MCF 10A (cell line): ENCODE measurements at regions of chr17 and their contacts with region 1.

Region 1: GRCh38 chr17:81238817-81239600 is at the starts of genes NDUFAF8 and TEPSIN:
- DNase-seq: peak; percentile 100
- H3K4me3 Mint-ChIP-seq: peak within 1 kb of the TSS; percentile 84
- H3K27ac Mint-ChIP-seq: peak within 1 kb of the TSS; percentile 87
- H3K4me1 Mint-ChIP-seq: peaks cover 24% of the 10 kb centered on the region
- H3K27me3 Mint-ChIP-seq: no peaks in the 10 kb centered on the region
- CTCF ChIP-seq: no peak
- total RNA-seq, gene NDUFAF8: 95.0 and 95.3 TPM in 2 replicates
- total RNA-seq, gene TEPSIN: 23.4 and 27.4 TPM in 2 replicates

Region 2: DNA sequence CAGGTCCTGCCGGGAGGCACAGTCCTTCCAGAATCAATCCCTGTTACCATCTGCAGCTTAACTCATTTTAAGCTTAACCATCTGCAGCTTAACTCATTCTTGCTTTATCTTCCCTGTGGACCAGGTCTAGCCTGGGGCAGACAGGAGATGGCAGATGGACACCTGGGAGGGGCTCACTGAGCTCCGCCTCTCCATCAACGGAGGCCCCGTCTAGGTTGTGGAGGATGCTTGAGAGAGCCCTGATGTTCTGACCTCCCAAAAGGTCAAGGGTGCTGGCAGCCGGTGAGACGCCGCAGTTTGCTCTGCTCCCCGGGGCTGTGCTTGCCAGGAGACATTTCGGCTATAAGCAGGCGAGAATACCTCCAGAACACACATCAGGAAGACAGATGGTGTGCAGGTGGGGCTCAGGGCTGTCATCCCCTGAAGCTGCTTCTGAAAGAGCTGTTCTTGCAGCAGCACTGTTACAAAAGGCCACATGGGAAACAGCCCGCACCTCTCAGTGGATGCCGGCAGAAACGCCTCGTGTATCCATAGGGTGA is 162.8 kb before region 1 on chr17:
- CTCF ChIA-PET with region 1: no interaction called
- POLR2A ChIA-PET with region 1: no interaction called
- intact Hi-C with region 1: no loop called
- DNase-seq: no peak
- H3K4me3 Mint-ChIP-seq: no peak overlapping the region
- H3K27ac Mint-ChIP-seq: peak overlapping the region; percentile 57
- H3K4me1 Mint-ChIP-seq: peaks cover 28% of the 10 kb centered on the region
- H3K27me3 Mint-ChIP-seq: no peaks in the 10 kb centered on the region
- CTCF ChIP-seq: no peak

Region 3: GRCh38 chr17:81222906-81223761 is 15.9 kb before region 1 on chr17 and contains the start of gene CEP131:
- CTCF ChIA-PET with region 1: interaction called, 4 read pairs
- POLR2A ChIA-PET with region 1: interaction called, 15 read pairs
- intact Hi-C with region 1: no loop called
- DNase-seq: peak; percentile 98
- H3K4me3 Mint-ChIP-seq: peak within 1 kb of the TSS; percentile 58
- H3K27ac Mint-ChIP-seq: peak within 1 kb of the TSS; percentile 28
- H3K4me1 Mint-ChIP-seq: peaks cover 12% of the 10 kb centered on the region
- H3K27me3 Mint-ChIP-seq: no peaks in the 10 kb centered on the region
- CTCF ChIP-seq: no peak
- total RNA-seq, gene CEP131: 8.0 and 9.5 TPM in 2 replicates

Region 4: GRCh38 chr17:81512560-81513371 is 273.8 kb after region 1 on chr17 and contains the start of gene ACTG1:
- CTCF ChIA-PET with region 1: no interaction called
- POLR2A ChIA-PET with region 1: interaction called, 13 read pairs
- intact Hi-C with region 1: no loop called
- DNase-seq: peak; percentile 92
- H3K4me3 Mint-ChIP-seq: peak within 1 kb of the TSS; percentile 92
- H3K27ac Mint-ChIP-seq: peak within 1 kb of the TSS; percentile 91
- H3K4me1 Mint-ChIP-seq: peaks cover 25% of the 10 kb centered on the region
- H3K27me3 Mint-ChIP-seq: no peaks in the 10 kb centered on the region
- CTCF ChIP-seq: no peak
- total RNA-seq, gene ACTG1: 1,056 and 1,461 TPM in 2 replicates